ENCODE measurements at regions of chr7 and their contacts with region 1.

Region 1: GRCh38 chr7:25259587-25260243 is 31.4 kb upstream of the NPVF start:
- DNase-seq: peak; percentile 67 to 80
- H3K4me3 ChIP-seq: no peak overlapping the region
- H3K27ac ChIP-seq: peak overlapping the region in 1 of 2 donors; percentile 69
- H3K4me1 ChIP-seq: peaks cover 0 to 5% of the 10 kb centered on the region in 2 donors
- H3K27me3 ChIP-seq: no peaks in the 10 kb centered on the region
- CTCF ChIP-seq: peak; percentile 81 to 93 (median 90)
- POLR2A ChIP-seq: no peak

Region 2: GRCh38 chr7:25389489-25390106 is 129.9 kb after region 1 on chr7:
- intact Hi-C with region 1: loop called (anchors 5 kb)
- DNase-seq: no peak
- H3K4me3 ChIP-seq: no peak overlapping the region
- H3K27ac ChIP-seq: peak overlapping the region in 1 of 2 donors; percentile 8
- H3K4me1 ChIP-seq: peaks cover 0 to 21% of the 10 kb centered on the region in 2 donors
- H3K27me3 ChIP-seq: no peaks in the 10 kb centered on the region
- CTCF ChIP-seq: peak; percentile 67 to 77 (median 71)
- POLR2A ChIP-seq: no peak

Region 3: GRCh38 chr7:25402532-25402931 is 142.8 kb after region 1 on chr7:
- intact Hi-C with region 1: no loop called
- DNase-seq: no peak
- H3K4me3 ChIP-seq: no peak overlapping the region
- H3K27ac ChIP-seq: no peak overlapping the region
- H3K4me1 ChIP-seq: peaks cover 5 to 17% of the 10 kb centered on the region in 2 donors
- H3K27me3 ChIP-seq: no peaks in the 10 kb centered on the region
- CTCF ChIP-seq: no peak
- POLR2A ChIP-seq: no peak

Region 4: GRCh38 chr7:25559581-25560367 is 300.1 kb after region 1 on chr7:
- intact Hi-C with region 1: loop called (anchors 5 kb)
- DNase-seq: no peak
- H3K4me3 ChIP-seq: no peak overlapping the region
- H3K27ac ChIP-seq: peak overlapping the region in 1 of 2 donors; percentile 6
- H3K4me1 ChIP-seq: peaks cover 0 to 6% of the 10 kb centered on the region in 2 donors
- H3K27me3 ChIP-seq: no peaks in the 10 kb centered on the region
- CTCF ChIP-seq: no peak
- POLR2A ChIP-seq: no peak

Measured in uterus (tissue), 4 donors.